Left cardiac atrium (tissue), 4 donors: ENCODE measurements at regions of chr19 and their contacts with region 1.

Region 1: GRCh38 chr19:38544034-38544958 is 73.5 kb downstream of the MAP4K1 start:
- DNase-seq: peak; percentile 78
- ATAC-seq: peak; percentile 85 to 89

Region 2: GRCh38 chr19:38626401-38626800 is 82.1 kb after region 1 on chr19:
- intact Hi-C with region 1: loop called in 1 of 2 experiments (anchors 5 kb)
- DNase-seq: no peak
- ATAC-seq: no peak

Region 3: GRCh38 chr19:38929929-38930775 is 385.9 kb after region 1 on chr19 and contains the start of gene SARS2:
- intact Hi-C with region 1: loop called in 1 of 2 experiments (anchors 10 kb)
- DNase-seq: peak; percentile 93
- ATAC-seq: peak; percentile 88 to 91
- total RNA-seq, gene SARS2: 9.5 to 17.7 TPM